Dendritic cell treated with granulocyte-macrophage colony-stimulating factor and Interleukin-4, amounts not matched to agents 40 ng/mL and 50 ng/mL, for 4 days (primary cell): ENCODE measurements at regions of chr5 and their contacts with region 1.

Region 1: GRCh38 chr5:83473346-83474163 is 2.0 kb downstream of the VCAN start:
- H3K4me3 Mint-ChIP-seq: peak overlapping the region; percentile 94
- H3K27ac Mint-ChIP-seq: peak overlapping the region; percentile 96
- H3K4me1 Mint-ChIP-seq: peaks cover 48% of the 10 kb centered on the region
- H3K27me3 Mint-ChIP-seq: peaks cover 18% of the 10 kb centered on the region

Region 2: GRCh38 chr5:82351754-82352145 is 1121.8 kb before region 1 on chr5:
- intact Hi-C with region 1: loop called (anchors 5 kb)
- H3K4me3 Mint-ChIP-seq: no peak overlapping the region
- H3K27ac Mint-ChIP-seq: no peak overlapping the region
- H3K4me1 Mint-ChIP-seq: peaks cover 14% of the 10 kb centered on the region
- H3K27me3 Mint-ChIP-seq: no peaks in the 10 kb centered on the region

Region 3: DNA sequence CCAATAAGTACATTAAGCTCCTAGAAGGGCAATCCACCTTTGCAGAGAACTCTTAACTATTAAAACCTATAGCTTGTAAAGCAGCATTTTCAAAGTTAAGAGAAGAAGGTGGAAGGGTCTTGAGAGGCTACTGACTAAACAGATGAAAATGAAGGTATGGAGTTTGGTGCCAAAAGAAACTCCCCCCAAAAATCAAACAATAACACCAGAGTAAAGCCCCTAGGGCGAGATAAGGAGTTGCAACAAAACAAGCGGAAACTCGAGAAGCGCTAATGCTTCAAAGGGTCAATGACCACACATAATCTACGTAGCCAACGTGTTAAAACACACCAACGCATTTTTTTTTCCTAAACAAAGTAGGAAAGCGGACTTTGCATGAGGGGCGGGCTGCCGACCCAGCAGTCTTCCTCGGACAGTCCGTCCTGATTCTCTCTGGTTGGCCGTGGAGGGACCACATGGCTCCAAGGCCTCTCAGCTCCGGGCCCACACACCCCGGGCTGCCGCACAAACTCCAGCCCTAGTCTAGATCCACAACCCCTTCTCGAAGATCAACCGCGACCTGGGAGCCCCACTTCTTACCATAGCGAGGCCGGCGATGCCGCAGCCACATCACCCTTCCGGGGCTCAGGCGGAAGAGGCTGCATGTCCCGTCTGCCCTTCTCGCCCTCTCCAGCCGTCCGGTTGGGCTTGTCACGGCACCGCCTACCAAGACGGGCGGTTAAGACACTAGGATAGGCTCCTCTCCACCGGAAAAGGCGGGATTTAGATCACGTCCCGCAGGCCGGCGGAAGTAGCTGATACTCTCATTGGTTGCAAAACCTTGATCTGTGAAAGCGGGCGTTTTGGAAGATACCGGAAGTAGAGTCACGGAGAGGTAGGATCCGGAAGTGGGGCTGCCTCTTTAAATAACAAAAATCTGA is 396.6 kb before region 1 on chr5 and contains the starts of genes TMEM167A and XRCC4:
- intact Hi-C with region 1: loop called (anchors 2 kb)
- H3K4me3 Mint-ChIP-seq: peak within 1 kb of the TSS; percentile 97
- H3K27ac Mint-ChIP-seq: peak within 1 kb of the TSS; percentile 98
- H3K4me1 Mint-ChIP-seq: peaks cover 50% of the 10 kb centered on the region
- H3K27me3 Mint-ChIP-seq: no peaks in the 10 kb centered on the region

Region 4: DNA sequence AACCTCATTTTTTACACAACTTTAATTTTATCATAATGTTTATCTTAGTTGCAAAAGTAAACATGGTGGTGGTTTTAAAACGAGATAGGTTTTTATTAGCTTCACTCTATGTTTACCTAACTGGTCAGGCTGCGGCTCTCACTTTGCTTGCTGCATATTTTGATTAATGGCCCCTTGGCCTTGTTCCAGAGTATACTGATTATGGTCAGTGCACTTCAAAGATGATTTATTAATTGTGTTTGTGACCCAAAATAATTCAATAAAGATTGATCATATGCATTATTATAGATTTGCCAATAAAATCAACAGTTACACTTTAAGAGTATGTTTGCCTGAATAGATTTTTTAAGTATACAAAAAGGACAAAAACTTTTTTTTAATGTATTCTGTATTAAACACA is 208.2 kb before region 1 on chr5:
- intact Hi-C with region 1: no loop called
- H3K4me3 Mint-ChIP-seq: no peak overlapping the region
- H3K27ac Mint-ChIP-seq: no peak overlapping the region
- H3K4me1 Mint-ChIP-seq: peaks cover 4% of the 10 kb centered on the region
- H3K27me3 Mint-ChIP-seq: no peaks in the 10 kb centered on the region

Region 5: GRCh38 chr5:83430130-83431010 is 43.2 kb before region 1 on chr5:
- intact Hi-C with region 1: loop called (anchors 2 kb)
- H3K4me3 Mint-ChIP-seq: no peak overlapping the region
- H3K27ac Mint-ChIP-seq: no peak overlapping the region
- H3K4me1 Mint-ChIP-seq: peaks cover 19% of the 10 kb centered on the region
- H3K27me3 Mint-ChIP-seq: no peaks in the 10 kb centered on the region

Region 6: DNA sequence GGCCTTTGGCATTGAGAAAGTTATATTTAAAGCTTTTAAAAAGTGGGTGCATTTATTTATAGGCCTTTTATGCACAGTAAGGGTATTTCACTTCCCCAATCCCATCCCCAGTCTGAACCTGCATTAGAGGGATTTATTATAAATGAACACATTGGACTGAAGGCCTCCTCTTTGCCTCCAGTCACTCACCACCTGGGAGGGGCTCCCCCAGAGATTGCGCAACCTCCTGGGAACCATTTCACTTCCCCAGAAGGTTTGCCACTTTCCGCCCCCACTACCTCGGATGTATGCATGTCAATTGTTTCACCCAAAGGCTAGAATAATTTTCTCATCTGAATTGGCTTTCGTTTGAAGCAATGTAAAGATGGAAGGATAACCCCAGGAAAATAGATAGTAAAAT is 31.8 kb before region 1 on chr5:
- intact Hi-C with region 1: no loop called
- H3K4me3 Mint-ChIP-seq: no peak overlapping the region
- H3K27ac Mint-ChIP-seq: no peak overlapping the region
- H3K4me1 Mint-ChIP-seq: peaks cover 16% of the 10 kb centered on the region
- H3K27me3 Mint-ChIP-seq: no peaks in the 10 kb centered on the region

Region 7: DNA sequence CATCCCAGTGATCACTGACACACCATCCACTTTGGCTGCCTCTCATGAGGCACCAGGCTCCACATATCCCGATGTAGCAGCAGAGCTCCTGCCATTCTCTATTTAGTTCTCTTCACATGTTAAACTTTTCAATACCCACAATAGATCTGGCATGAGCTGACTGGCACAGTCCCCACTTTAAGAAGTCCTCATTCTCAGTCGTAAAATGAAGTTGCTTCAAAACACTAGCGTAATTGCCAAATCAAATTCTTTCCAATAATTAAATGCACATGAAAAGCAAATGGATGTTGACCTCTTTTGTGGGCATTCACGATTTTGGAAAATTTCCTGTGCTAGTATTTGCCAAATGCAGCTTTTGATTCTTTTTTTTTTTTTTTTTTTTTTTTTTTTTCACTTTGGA is 214.7 kb after region 1 on chr5:
- intact Hi-C with region 1: no loop called
- H3K4me3 Mint-ChIP-seq: no peak overlapping the region
- H3K27ac Mint-ChIP-seq: no peak overlapping the region
- H3K4me1 Mint-ChIP-seq: no peaks in the 10 kb centered on the region
- H3K27me3 Mint-ChIP-seq: peaks cover 9% of the 10 kb centered on the region